CD14-positive monocyte (primary cell): ENCODE measurements at regions of chr12 and their contacts with region 1.

Region 1: GRCh38 chr12:122946690-122947341 is 19.4 kb downstream of the ABCB9 start:
- DNase-seq: peak; percentile 98 to 100 (median 99)
- H3K4me3 ChIP-seq: peak overlapping the region in 1 of 3 experiments; percentile 53
- H3K4me3 Mint-ChIP-seq: peak overlapping the region; percentile 69 to 88
- H3K27ac ChIP-seq: peak overlapping the region; percentile 91
- H3K27ac Mint-ChIP-seq: peak overlapping the region; percentile 98 to 100 (median 99)
- H3K4me1 ChIP-seq: peaks cover 33 to 35% of the 10 kb centered on the region in 2 donors
- H3K4me1 Mint-ChIP-seq: peaks cover 44% of the 10 kb centered on the region
- H3K27me3 ChIP-seq: no peaks in the 10 kb centered on the region
- H3K27me3 Mint-ChIP-seq: peaks cover 3 to 5% (median 3%) of the 10 kb centered on the region in 3 donors
- CTCF ChIP-seq: peak; percentile 52

Region 2: DNA sequence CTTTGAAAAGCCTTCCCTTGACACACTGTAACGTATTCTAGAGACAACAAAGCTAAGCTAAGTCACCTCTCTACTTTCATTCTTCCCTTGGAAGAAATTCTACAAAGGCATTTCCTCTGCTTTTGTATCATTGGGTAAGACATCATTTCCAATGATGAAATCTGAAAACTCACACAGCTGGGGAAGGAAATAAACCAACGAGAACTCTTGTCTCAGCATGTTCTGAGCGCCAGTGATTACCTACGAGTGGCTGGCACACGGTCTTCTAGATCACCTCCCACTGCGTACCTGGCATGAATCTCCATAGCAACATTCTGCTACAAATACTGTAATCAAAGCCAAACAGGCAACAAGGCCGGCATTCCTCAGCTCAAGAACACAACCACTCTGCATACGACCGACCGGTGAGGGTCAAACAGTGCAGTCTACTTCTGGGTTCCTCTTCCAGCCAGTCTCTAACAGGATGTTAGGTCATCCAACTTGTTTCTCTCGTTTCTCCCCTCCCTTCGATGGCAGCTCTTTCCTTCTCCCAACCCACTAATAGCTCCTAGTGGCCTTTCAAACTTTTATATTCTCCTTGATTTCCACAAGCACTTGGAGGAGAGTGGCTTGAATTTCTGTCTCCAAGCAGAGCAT is 58.5 kb before region 1 on chr12:
- intact Hi-C with region 1: loop called (anchors 2 to 5 kb)
- DNase-seq: peak; percentile 70 to 82 (median 81)
- H3K4me3 ChIP-seq: peak overlapping the region; percentile 25 to 67 (median 43)
- H3K4me3 Mint-ChIP-seq: peak overlapping the region; percentile 75 to 93
- H3K27ac ChIP-seq: peak overlapping the region; percentile 89 to 97
- H3K27ac Mint-ChIP-seq: peak overlapping the region; percentile 97 to 100 (median 99)
- H3K4me1 ChIP-seq: peaks cover 79 to 92% of the 10 kb centered on the region in 2 donors
- H3K4me1 Mint-ChIP-seq: peaks cover 87% of the 10 kb centered on the region
- H3K27me3 ChIP-seq: no peaks in the 10 kb centered on the region
- H3K27me3 Mint-ChIP-seq: peaks cover 0 to 8% (median 2%) of the 10 kb centered on the region in 3 donors
- CTCF ChIP-seq: no peak

Region 3: GRCh38 chr12:122899887-122900286 is 46.9 kb before region 1 on chr12:
- intact Hi-C with region 1: loop called in 1 of 2 experiments (anchors 2 kb)
- DNase-seq: no peak
- H3K4me3 ChIP-seq: no peak overlapping the region
- H3K4me3 Mint-ChIP-seq: no peak overlapping the region
- H3K27ac ChIP-seq: no peak overlapping the region
- H3K27ac Mint-ChIP-seq: no peak overlapping the region
- H3K4me1 ChIP-seq: peaks cover 42 to 48% of the 10 kb centered on the region in 2 donors
- H3K4me1 Mint-ChIP-seq: peaks cover 47% of the 10 kb centered on the region
- H3K27me3 ChIP-seq: peaks cover 0 to 3% of the 10 kb centered on the region in 2 donors
- H3K27me3 Mint-ChIP-seq: peaks cover 3 to 7% (median 6%) of the 10 kb centered on the region in 3 donors
- CTCF ChIP-seq: no peak

Region 4: GRCh38 chr12:122974274-122974891 is 27.6 kb after region 1 on chr12:
- intact Hi-C with region 1: no loop called
- DNase-seq: peak; percentile 95 to 98 (median 96)
- H3K4me3 ChIP-seq: peak overlapping the region; percentile 62 to 99 (median 84)
- H3K4me3 Mint-ChIP-seq: peak overlapping the region; percentile 97
- H3K27ac ChIP-seq: peak overlapping the region; percentile 94 to 97
- H3K27ac Mint-ChIP-seq: peak overlapping the region; percentile 97 to 100 (median 99)
- H3K4me1 ChIP-seq: peaks cover 28 to 33% of the 10 kb centered on the region in 2 donors
- H3K4me1 Mint-ChIP-seq: peaks cover 26% of the 10 kb centered on the region
- H3K27me3 ChIP-seq: no peaks in the 10 kb centered on the region
- H3K27me3 Mint-ChIP-seq: no peaks in the 10 kb centered on the region
- CTCF ChIP-seq: no peak